ENCODE measurements at regions of chr12 and their contacts with region 1.

Region 1: DNA sequence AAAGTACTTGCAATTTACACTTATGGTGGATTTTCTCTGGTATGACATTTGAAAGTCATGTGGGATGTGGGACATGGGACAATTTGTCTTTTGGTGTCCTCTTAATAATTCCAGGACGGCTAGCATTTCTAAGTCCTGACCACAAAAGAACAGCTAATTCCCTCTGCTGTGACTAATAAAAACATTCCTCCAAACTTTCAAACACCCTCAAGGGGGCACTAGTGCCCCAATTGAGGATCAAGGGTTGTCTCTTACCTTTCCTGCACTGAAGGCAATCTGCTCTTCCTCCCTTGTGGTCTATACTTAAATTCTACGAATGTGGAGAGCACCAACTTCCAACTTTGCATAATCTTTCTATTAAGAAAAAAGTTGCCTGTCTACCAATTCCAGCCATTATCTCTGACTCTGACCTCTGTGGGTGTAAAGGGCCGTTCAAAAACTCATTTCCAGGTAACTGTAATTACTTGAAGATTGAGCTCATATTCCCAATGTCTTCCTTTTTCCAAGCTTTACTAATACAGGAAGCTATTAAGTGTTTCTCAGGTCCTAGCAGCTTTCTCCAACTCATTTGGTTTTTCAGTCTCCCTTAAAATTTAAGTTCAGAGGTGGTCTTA is 210.2 kb downstream of the PTPRO start:
- DNase-seq: peak; percentile 68
- H3K4me3 Mint-ChIP-seq: no peak overlapping the region
- H3K27ac Mint-ChIP-seq: no peak overlapping the region
- H3K4me1 Mint-ChIP-seq: peaks cover 11% of the 10 kb centered on the region
- H3K27me3 Mint-ChIP-seq: no peaks in the 10 kb centered on the region

Region 2: DNA sequence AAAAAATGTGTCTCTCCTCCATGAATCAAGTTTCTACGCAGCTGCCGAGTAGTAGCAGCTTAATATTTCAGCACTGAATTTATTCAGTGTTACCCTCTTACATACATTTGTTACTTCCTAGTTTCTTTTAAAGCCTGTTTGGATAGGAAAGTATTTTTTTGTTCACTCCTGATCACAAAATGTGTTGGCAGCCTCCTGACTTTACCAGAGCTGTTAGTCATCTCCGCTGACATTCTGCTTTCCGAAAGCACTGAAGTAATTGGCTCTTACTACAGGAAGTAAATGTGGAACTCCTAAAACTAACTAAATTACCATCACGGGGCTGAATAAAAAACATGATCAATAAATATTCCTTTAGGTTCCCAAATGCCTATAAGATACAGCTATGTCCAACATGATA is 31.2 kb after region 1 on chr12:
- CTCF ChIA-PET with region 1: interaction called, 61 read pairs
- POLR2A ChIA-PET with region 1: no interaction called
- intact Hi-C with region 1: loop called (anchors 1 kb)
- DNase-seq: peak; percentile 40
- H3K4me3 Mint-ChIP-seq: peak overlapping the region; percentile 69
- H3K27ac Mint-ChIP-seq: peak overlapping the region; percentile 90
- H3K4me1 Mint-ChIP-seq: peaks cover 58% of the 10 kb centered on the region
- H3K27me3 Mint-ChIP-seq: no peaks in the 10 kb centered on the region

Region 3: DNA sequence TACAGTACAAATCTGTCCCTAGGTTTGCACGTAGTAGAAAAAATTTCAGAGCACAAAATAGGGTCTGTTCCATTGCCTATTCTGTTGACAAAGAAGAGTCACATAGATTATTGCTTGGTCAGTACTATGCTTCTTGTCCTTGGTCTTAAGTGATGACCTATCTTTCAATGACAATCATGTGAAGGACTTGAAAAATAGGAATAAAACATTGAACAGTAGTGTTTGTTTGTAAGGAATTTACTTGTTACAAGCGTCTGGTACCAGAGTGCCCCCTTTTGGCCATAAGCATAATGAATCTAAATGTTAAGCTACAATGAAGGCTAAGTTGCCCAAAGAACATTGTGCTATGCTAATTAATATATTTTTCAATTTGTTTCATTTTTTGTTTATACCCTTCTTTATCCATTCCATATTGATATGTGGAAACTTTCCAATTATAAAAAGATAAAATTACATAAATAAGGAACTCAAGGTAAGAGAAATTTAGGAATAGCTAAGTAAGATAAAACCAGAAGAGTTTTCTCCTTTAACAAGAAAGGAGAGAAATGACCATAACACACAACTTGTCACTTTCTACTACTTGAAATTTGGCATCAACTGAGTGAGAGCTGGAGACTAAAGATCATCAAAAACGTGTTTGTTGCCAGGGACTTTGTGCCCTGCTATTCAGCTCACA is 52.0 kb after region 1 on chr12:
- CTCF ChIA-PET with region 1: interaction called, 478 read pairs
- POLR2A ChIA-PET with region 1: no interaction called
- intact Hi-C with region 1: loop called (anchors 1 kb)
- DNase-seq: peak; percentile 18
- H3K4me3 Mint-ChIP-seq: no peak overlapping the region
- H3K27ac Mint-ChIP-seq: no peak overlapping the region
- H3K4me1 Mint-ChIP-seq: peaks cover 6% of the 10 kb centered on the region
- H3K27me3 Mint-ChIP-seq: no peaks in the 10 kb centered on the region

Region 4: GRCh38 chr12:15789220-15790171 is 257.0 kb after region 1 on chr12 and contains the start of gene EPS8:
- CTCF ChIA-PET with region 1: interaction called, 3 read pairs
- POLR2A ChIA-PET with region 1: no interaction called
- intact Hi-C with region 1: loop called (anchors 2 kb)
- DNase-seq: peak; percentile 91
- H3K4me3 Mint-ChIP-seq: peak within 1 kb of the TSS; percentile 79
- H3K27ac Mint-ChIP-seq: peak within 1 kb of the TSS; percentile 15
- H3K4me1 Mint-ChIP-seq: peaks cover 14% of the 10 kb centered on the region
- H3K27me3 Mint-ChIP-seq: peaks cover 33% of the 10 kb centered on the region
- total RNA-seq, gene EPS8: 3.2 to 3.5 TPM

Region 5: DNA sequence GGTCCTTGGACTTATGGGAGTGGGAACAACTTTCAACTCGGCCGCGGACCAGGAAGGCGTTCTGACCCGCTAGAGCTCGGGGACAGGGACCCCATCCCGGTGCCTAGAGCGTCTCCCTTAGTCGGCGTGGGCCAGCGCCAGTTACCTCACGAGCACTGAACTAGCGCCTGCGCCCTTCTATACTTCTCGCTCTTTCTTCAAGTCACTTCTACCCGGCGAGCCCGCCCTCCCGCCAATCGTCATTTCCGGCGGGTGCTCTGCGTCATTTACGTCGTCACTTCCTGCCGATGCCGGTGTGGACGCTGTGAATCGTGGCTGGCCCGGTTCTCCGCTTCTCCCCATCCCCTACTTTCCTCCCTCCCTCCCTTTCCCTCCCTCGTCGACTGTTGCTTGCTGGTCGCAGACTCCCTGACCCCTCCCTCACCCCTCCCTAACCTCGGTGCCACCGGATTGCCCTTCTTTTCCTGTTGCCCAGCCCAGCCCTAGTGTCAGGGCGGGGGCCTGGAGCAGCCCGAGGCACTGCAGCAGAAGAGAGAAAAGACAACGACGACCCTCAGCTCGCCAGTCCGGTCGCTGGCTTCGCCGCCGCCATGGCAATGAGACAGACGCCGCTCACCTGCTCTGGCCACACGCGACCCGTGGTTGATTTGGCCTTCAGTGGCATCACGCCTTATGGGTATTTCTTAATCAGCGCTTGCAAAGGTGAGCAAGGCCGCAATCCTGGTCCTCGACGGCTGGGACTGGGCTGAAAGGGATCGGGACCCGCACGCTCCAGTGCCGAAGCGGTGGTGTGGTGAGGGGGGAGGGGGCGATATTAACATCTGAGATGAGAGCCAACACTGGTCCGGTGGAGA is 349.9 kb after region 1 on chr12 and contains the start of gene STRAP:
- CTCF ChIA-PET with region 1: no interaction called
- POLR2A ChIA-PET with region 1: no interaction called
- intact Hi-C with region 1: loop called (anchors 1 kb)
- DNase-seq: peak; percentile 98
- H3K4me3 Mint-ChIP-seq: peak within 1 kb of the TSS; percentile 96
- H3K27ac Mint-ChIP-seq: peak within 1 kb of the TSS; percentile 94
- H3K4me1 Mint-ChIP-seq: peaks cover 48% of the 10 kb centered on the region
- H3K27me3 Mint-ChIP-seq: no peaks in the 10 kb centered on the region
- total RNA-seq, gene STRAP: 135 to 140 TPM